Activated CD4-positive, alpha-beta T cell treated with anti-CD3 and anti-CD28 coated beads, Interleukin-2, amount 10 ng/mL, durations not matched to agents 7 days and 5 days (primary cell): ENCODE measurements at regions of chr15 and their contacts with region 1.

Region 1: DNA sequence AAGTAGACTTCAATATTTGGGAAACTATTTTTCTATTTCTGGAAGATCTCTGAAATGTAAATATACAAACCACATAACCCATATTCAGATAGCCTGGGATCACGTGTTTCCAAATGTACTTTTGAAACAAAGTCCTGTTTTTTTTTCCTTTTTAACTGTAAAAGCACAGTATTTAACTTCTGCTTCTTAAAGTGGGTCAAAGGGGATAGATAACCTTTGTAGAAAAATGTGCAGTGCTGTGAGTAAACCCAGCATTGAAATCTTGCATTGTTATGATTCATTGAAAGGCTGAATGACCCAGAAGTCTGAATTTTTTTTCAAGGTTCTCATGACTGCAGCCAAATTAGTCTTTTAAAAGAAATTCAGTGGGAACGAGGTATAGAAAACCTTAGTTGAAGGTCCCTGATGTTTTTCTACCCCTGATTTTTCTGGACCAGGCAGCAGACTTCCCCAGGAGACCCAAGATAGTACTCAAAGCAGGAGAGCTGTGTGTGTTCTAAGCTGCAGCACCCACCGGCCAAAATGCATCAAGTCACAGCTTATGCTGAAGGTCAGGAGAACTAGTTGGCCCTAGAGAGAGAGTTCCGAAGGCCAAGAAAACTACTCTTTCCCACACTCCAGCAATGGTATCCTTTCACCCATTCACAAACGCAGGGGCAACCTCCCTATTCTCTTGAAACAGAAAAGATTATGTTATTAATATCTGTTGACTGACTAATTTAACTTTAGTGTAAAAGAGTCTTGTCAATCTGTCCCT is 43.6 kb upstream of the APH1B start:
- DNase-seq: no peak
- H3K4me3 Mint-ChIP-seq: no peak overlapping the region
- H3K27ac Mint-ChIP-seq: no peak overlapping the region
- H3K4me1 Mint-ChIP-seq: peaks cover 65% of the 10 kb centered on the region
- H3K27me3 Mint-ChIP-seq: no peaks in the 10 kb centered on the region

Region 2: DNA sequence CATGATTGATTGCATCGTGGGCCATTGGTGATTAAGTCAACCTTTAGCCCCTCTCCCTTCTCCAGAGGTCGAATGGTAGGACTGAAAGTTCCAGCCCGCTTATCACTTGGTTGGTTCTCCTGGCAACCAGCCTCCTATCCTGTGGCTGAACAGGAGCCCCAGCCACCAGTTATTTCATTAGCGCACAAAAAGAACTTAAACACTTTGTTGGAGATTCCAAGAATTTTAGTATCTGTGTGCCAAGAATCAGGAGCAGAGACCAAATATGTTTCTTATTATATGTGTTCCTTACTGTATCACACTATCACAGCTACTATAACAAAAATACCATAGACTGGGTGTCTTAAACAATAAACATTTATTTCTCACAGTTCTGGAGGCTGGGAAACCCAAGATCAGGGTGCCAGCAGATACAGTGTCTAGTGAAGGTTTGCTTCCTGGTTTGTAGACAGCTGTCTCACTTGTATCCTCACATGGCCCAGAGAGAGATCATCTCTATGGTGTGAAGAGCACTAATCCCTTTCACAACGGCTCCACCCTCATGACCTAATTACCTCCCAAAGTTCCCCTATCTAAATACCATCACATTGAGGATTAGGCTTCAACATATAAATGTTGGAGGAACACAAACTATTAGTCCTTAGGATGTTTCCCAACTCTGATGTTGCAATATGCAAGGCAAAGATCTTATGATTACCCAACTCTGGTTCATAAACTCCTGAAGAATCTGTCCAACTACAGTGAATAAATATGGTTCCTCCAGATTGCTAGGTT is 13.0 kb after region 1 on chr15:
- CTCF ChIA-PET with region 1: interaction called, 13 read pairs
- POLR2A ChIA-PET with region 1: interaction called, 3 read pairs
- DNase-seq: no peak
- H3K4me3 Mint-ChIP-seq: no peak overlapping the region
- H3K27ac Mint-ChIP-seq: no peak overlapping the region
- H3K4me1 Mint-ChIP-seq: peaks cover 39% of the 10 kb centered on the region
- H3K27me3 Mint-ChIP-seq: no peaks in the 10 kb centered on the region

Region 3: GRCh38 chr15:63350178-63350621 is 116.4 kb after region 1 on chr15:
- CTCF ChIA-PET with region 1: no interaction called
- POLR2A ChIA-PET with region 1: no interaction called
- DNase-seq: no peak
- H3K4me3 Mint-ChIP-seq: no peak overlapping the region
- H3K27ac Mint-ChIP-seq: no peak overlapping the region
- H3K4me1 Mint-ChIP-seq: no peaks in the 10 kb centered on the region
- H3K27me3 Mint-ChIP-seq: no peaks in the 10 kb centered on the region